ENCODE measurements at regions of chr15 and their contacts with region 1.

Region 1: GRCh38 chr15:43824302-43825246 is at the start of gene MFAP1:
- DNase-seq: peak; percentile 96
- ATAC-seq: peak; percentile 82
- H3K4me3 Mint-ChIP-seq: peak within 1 kb of the TSS; percentile 89
- H3K27ac Mint-ChIP-seq: peak within 1 kb of the TSS; percentile 96
- H3K4me1 Mint-ChIP-seq: peaks cover 60% of the 10 kb centered on the region
- H3K27me3 Mint-ChIP-seq: no peaks in the 10 kb centered on the region
- total RNA-seq, gene MFAP1: 35.8 to 40.1 TPM

Region 2: DNA sequence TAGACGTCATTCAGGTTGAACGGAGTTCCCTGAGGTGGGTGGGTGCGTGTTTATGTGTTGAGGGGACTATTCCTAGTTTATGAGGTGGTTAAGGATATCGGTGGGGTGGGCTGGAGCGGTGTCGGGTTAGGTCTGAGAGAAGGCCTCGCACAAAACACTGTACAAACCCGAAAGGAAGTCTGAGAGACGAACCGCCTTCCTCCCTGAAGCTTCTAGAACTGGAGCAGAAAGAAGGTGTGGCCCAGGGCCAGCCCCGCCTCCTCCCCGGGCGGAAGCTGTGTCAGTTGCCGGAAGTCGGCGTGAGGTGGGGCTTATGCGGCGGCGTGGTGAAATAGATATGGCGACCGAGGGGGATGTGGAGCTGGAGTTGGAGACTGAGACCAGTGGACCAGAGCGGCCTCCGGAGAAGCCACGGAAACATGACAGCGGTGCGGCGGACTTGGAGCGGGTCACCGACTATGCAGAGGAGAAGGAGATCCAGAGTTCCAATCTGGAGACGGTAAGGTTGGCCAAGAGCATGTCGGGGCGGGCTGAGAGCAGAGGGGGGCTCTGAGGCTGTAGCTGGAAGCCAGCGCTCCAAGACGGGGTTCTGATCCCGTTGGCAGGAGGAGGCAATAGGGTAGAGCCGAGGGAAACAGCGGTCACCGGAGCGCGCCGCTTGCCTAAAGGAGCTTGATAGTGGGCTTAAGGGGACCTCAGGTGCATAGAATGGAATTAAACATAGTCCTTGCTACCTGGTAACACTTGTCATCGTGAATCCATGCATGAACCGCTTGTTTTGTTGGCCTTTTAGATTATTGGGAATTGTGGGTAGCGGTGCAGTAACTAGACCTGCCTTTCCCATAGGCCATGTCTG is 24.1 kb before region 1 on chr15 and contains the start of gene HYPK:
- CTCF ChIA-PET with region 1: interaction called, 8 read pairs
- POLR2A ChIA-PET with region 1: interaction called, 23 read pairs
- DNase-seq: peak; percentile 95
- ATAC-seq: peak; percentile 97
- H3K4me3 Mint-ChIP-seq: peak within 1 kb of the TSS; percentile 98
- H3K27ac Mint-ChIP-seq: peak within 1 kb of the TSS; percentile 98
- H3K4me1 Mint-ChIP-seq: peaks cover 43% of the 10 kb centered on the region
- H3K27me3 Mint-ChIP-seq: no peaks in the 10 kb centered on the region
- total RNA-seq, gene HYPK: 15.8 to 19.9 TPM

Region 3: DNA sequence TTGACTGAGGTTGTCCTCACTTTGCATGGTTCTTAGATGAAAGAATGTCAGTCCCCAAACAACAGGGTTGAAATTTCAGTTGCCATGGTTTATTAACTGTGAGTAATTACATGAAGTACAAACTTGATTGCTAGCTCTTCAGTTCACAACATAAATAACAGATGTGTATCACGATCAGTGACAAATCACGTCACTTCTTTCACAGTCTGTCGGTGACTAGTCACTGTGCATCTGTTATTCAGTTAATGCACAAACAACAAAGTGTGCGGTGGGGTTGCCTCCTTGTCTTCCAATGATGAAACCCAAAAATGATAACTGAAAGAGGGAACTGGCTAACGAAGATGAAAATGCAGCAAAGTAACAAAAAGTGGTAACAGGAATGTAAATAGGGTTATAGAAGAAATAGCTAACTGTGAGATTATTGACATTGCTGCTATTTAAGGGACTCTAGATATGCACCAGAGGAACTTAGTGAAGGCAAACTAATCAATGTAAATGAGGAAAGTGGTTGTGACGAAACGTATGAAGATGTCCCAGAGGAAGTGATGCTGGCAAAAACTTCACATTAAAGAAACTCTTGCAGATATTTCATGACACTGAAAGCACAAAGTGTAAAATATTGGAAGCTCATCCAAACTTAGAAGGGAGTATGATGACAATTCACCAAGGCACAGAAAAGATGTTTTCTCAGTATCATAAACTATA is 161.6 kb after region 1 on chr15:
- CTCF ChIA-PET with region 1: no interaction called
- POLR2A ChIA-PET with region 1: no interaction called
- DNase-seq: no peak
- ATAC-seq: no peak
- H3K4me3 Mint-ChIP-seq: no peak overlapping the region
- H3K27ac Mint-ChIP-seq: no peak overlapping the region
- H3K4me1 Mint-ChIP-seq: no peaks in the 10 kb centered on the region
- H3K27me3 Mint-ChIP-seq: peaks cover 43% of the 10 kb centered on the region

Measured in activated CD8-positive, alpha-beta T cell treated with anti-CD3 and anti-CD28 coated beads, Interleukin-2, amount 10 ng/mL, durations not matched to agents 7 days and 5 days (primary cell).